Ovary (tissue), 10 donors: ENCODE measurements at regions of chr6 and their contacts with region 1.

Region 1: DNA sequence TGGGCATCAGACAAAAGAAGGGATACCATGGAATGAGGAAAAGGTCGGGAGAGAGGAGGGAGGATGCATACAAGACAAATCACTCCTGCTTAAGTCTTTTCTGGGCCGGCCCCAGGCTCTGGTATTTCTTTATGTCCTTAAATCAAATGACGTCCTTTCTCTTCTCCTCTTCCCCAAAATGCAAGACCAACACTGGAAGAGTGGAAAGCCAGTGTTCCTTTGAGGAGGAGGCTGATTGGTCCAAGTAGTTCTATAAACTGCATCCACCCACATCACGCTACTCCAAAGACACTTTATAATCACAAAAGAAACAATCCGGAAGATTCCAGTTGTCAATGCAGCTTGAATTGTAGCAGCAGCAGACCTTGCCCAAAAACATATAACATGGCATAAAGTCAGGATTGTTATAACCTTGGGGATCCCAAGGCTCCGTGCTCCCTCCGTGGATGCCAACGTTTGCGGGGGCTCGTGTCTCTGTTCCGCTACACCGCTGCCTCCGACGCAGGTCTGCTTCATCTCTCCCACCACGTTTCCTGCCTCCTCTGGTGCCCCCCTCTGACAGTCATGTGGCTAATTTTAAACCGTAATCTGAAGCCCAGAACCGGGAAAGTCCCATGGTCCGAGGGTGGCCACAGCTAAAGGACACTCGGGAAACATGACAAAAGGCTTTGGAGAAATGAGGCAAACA is 47.1 kb downstream of the MCUR1 start:
- DNase-seq: peak; percentile 61 to 74 (median 63)
- H3K4me3 ChIP-seq: peak overlapping the region; percentile 33
- H3K27ac ChIP-seq: no peak overlapping the region
- H3K4me1 ChIP-seq: peaks cover 3% of the 10 kb centered on the region
- H3K27me3 ChIP-seq: no peaks in the 10 kb centered on the region
- CTCF ChIP-seq: no peak
- EP300 ChIP-seq: no peak
- POLR2A ChIP-seq: no peak

Region 2: GRCh38 chr6:13355043-13355951 is 412.0 kb before region 1 on chr6:
- intact Hi-C with region 1: no loop called
- DNase-seq: no peak
- H3K4me3 ChIP-seq: no peak overlapping the region
- H3K27ac ChIP-seq: no peak overlapping the region
- H3K4me1 ChIP-seq: no peaks in the 10 kb centered on the region
- H3K27me3 ChIP-seq: no peaks in the 10 kb centered on the region
- CTCF ChIP-seq: no peak
- EP300 ChIP-seq: no peak
- POLR2A ChIP-seq: no peak

Region 3: DNA sequence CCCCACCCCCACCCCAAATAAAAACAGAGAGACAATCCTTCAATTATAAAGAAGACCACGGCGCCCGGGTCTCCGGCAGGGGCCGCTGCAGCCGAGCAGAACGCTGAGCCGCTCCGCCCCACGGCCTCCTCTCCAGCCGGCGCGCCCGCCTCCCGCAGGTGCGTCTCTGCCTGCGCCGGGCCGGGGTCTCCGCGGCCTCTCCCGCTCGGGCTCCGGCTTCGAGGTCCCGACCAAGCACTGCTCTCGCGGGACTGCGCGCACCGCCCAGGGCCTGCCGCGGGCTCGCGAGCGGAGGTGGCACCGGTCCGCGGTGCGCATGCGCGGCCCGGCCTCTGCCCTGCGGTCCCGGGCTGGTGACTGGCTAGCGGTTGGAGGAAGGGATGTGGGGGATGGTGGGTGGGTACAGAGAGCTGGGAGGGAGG is 193.1 kb before region 1 on chr6:
- intact Hi-C with region 1: loop called in 1 of 4 experiments (anchors 5 kb)
- DNase-seq: peak; percentile 86 to 92 (median 92)
- H3K4me3 ChIP-seq: peak overlapping the region; percentile 64
- H3K27ac ChIP-seq: peak overlapping the region; percentile 76 to 89
- H3K4me1 ChIP-seq: no peaks in the 10 kb centered on the region
- H3K27me3 ChIP-seq: no peaks in the 10 kb centered on the region
- CTCF ChIP-seq: peak; percentile 14 to 70 (median 70)
- EP300 ChIP-seq: no peak
- POLR2A ChIP-seq: no peak

Region 4: GRCh38 chr6:13614926-13615798 is 152.1 kb before region 1 on chr6 and contains the start of gene NOL7:
- intact Hi-C with region 1: loop called in 2 of 4 experiments (anchors 5 to 10 kb)
- DNase-seq: peak; percentile 98 to 100 (median 99)
- H3K4me3 ChIP-seq: peak within 1 kb of the TSS; percentile 98
- H3K27ac ChIP-seq: peak within 1 kb of the TSS; percentile 10 to 78
- H3K4me1 ChIP-seq: peaks cover 1% of the 10 kb centered on the region
- H3K27me3 ChIP-seq: no peaks in the 10 kb centered on the region
- CTCF ChIP-seq: peak; percentile 96 to 99 (median 98)
- EP300 ChIP-seq: no peak
- POLR2A ChIP-seq: peak; percentile 77
- total RNA-seq, gene NOL7: 49.3 to 77.7 (median 58.6) TPM

Region 5: GRCh38 chr6:13711733-13712598 is 55.3 kb before region 1 on chr6 and contains the start of gene RANBP9:
- intact Hi-C with region 1: loop called in 1 of 4 experiments (anchors 5 kb)
- DNase-seq: peak; percentile 86 to 91 (median 87)
- H3K4me3 ChIP-seq: peak within 1 kb of the TSS; percentile 72
- H3K27ac ChIP-seq: peak within 1 kb of the TSS; percentile 90 to 98
- H3K4me1 ChIP-seq: peaks cover 6% of the 10 kb centered on the region
- H3K27me3 ChIP-seq: no peaks in the 10 kb centered on the region
- CTCF ChIP-seq: no peak
- EP300 ChIP-seq: no peak
- POLR2A ChIP-seq: peak; percentile 42
- total RNA-seq, gene RANBP9: 26.5 to 40.8 (median 37.0) TPM

Region 6: DNA sequence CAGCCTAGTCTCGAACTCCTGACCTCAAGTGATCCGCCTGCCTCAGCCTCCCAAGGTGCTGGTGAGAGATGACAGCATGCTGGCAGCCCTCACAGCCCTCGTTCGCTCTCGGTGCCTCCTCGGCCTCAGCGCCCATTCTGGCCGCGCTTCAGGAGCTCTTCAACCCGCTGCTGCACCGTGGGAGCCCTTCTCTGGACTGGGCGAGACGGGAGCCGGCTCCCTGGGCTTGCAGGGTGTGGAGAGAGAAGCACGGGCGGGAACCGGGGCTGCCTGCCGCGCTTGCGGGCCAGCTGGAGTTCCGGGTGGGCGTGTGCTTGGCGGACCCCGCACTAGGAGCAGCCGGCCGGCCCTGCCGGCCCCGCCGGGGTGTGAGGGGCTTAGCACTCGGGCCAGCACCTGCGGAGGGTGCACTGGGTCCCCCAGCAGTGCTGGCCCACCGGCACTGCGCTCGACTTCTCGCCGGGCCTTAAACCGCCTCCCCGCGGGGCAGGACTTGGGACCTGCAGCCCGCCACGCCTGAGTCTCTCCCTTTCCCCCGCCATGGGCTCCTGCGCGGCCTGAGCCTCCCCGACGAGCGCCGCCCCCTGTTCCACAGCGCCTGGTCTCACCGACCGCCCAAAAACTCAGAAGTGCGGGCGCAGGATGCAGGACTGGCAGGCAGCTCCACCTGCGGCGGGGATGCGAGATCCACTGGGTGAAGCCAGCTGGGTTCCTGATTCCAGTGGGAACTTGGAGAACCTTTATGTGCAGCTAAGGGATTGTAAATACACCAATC is 24.1 kb before region 1 on chr6:
- intact Hi-C with region 1: no loop called
- DNase-seq: peak in 3 of 5 donors; percentile 28 to 41 (median 35)
- H3K4me3 ChIP-seq: peak overlapping the region; percentile 22
- H3K27ac ChIP-seq: no peak overlapping the region
- H3K4me1 ChIP-seq: no peaks in the 10 kb centered on the region
- H3K27me3 ChIP-seq: no peaks in the 10 kb centered on the region
- CTCF ChIP-seq: no peak
- EP300 ChIP-seq: no peak
- POLR2A ChIP-seq: no peak